ENCODE measurements at regions of chr15 and their contacts with region 1.

Region 1: DNA sequence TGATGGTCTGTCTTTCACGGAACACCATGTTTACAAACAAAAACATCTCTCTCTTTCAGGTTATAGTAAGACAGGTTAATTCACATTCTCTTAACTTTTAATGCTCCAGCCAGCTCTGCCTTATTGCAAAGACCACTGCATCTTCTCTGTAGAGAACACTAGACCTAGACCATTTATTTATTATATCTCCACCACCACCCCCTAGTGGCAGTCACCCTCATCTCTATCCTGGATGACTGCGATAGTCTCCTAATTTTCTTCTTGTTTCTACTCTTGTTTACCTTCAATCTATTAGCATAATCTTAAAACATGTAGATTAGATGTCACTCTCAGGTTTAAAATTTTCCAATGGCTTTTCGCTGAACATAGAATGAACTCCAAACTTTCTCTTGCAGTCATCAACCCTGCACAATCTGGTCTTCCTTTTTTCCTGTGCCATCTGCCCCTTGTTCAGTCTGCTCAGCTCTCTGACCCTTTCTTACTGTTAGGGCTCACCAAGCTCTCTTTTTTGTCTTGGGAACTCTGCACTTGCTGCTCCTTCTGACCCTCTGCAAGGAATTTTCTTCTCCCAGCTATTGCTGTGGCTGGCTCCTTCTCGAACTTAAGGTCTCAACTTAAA is 155.6 kb downstream of the SQOR start:
- DNase-seq: no peak
- H3K4me3 Mint-ChIP-seq: no peak overlapping the region
- H3K27ac Mint-ChIP-seq: no peak overlapping the region
- H3K4me1 Mint-ChIP-seq: no peaks in the 10 kb centered on the region
- H3K27me3 Mint-ChIP-seq: peaks cover 8% of the 10 kb centered on the region

Region 2: GRCh38 chr15:45705510-45706473 is 84.6 kb before region 1 on chr15:
- intact Hi-C with region 1: loop called (anchors 1 kb)
- DNase-seq: peak; percentile 51
- H3K4me3 Mint-ChIP-seq: peak overlapping the region; percentile 86
- H3K27ac Mint-ChIP-seq: peak overlapping the region; percentile 9
- H3K4me1 Mint-ChIP-seq: peaks cover 16% of the 10 kb centered on the region
- H3K27me3 Mint-ChIP-seq: peaks cover 21% of the 10 kb centered on the region

Region 3: DNA sequence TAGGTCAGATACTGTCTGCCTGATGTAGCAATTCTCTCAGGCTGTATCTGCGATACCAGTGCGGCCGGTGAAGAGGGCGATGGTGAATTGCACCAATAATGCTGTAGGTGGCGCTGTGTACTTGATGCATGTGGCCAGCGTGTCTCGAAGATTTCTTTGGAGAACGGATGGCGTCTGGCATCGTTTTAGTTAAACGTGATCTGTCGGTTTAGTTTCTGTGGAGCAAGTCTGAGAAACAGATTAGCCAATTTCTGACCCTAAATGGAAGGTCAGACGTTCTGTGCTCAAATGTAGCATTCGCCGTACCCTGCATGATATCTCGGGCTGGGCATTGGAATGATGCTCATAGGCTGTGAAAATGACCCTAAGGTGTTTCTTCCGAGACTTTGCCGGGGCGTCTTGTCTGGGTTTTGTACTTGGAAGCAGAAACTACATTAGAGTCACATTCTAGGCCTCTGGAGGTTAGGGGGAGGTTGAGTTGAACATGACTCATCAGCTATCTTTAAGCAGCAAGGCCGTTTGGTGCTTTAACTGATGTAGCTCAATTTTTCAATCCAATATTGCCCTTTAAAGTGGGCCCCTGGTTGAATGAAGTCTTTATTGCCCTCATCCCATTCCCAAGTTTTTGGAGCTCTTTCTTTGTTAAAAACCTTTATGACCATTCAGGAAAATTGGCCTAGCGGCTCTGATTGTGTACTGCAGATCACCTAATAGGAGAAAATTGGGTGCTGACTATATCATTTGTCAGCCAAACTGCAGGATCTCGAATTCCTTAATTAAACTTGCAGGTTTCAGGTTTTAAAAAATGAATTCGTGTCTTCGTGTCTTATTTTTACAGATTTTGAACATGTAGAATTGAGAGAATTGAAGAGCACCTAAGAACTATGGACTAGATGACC is 75.6 kb before region 1 on chr15:
- intact Hi-C with region 1: loop called (anchors 1 kb)
- DNase-seq: peak; percentile 9
- H3K4me3 Mint-ChIP-seq: no peak overlapping the region
- H3K27ac Mint-ChIP-seq: no peak overlapping the region
- H3K4me1 Mint-ChIP-seq: no peaks in the 10 kb centered on the region
- H3K27me3 Mint-ChIP-seq: peaks cover 16% of the 10 kb centered on the region